Right ventricle myocardium superior (tissue), 1 donor: ENCODE measurements at regions of chr1 and their contacts with region 1.

Region 1: DNA sequence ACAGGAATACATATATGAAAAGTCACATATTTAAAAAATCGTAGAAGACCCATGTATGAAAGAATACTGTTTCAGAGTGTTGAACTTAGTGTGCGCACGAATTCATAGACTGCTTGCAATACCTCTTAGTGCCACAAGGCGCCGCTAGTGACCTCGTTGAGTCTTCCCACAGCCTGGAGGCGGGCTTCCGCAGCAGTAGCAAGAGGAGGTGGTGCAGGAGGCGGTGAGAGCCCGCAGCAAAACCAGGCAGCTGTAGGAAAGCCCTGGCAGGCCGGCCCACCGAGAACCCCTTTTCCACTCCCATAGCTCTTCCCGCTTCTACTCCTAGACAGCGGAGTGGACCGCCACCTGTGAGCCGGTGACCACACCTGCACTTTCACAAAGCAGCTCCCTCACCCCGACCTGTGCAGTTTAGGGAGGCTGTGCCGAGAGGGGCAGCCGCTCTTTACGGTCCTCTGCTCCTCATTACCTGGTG is 23.5 kb downstream of the MTARC1 start:
- DNase-seq: peak; percentile 89
- ATAC-seq: peak; percentile 82

Region 2: DNA sequence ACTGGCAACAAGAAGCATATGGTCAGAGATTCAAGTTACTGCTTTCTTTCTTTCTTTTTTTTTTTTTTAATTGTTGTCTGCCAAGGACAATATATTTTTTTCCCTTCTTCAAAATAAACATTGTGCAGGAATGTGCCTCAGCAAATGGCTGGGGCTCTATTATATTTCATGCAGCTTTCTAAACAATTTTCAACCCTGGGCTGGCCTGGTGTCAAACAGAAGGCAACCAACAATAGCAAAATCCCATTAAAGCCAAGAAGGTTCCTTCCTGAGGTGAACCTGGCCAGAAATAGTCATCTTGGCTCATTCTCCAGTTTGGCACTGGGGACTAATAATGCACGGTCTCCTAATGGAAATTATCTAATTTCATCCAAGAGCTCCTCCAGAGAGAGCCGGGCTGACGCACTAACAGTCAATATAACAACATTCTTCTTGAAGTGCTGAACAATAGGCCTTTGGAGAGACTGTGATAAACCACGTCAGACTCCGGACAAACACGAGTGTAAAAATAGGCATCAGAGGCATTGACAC is 33.3 kb after region 1 on chr1:
- intact Hi-C with region 1: loop called (anchors 2 kb)
- DNase-seq: peak; percentile 58
- ATAC-seq: peak; percentile 94